Endothelial cell of umbilical vein (primary cell): ENCODE measurements at regions of chr4 and their contacts with region 1.

Region 1: DNA sequence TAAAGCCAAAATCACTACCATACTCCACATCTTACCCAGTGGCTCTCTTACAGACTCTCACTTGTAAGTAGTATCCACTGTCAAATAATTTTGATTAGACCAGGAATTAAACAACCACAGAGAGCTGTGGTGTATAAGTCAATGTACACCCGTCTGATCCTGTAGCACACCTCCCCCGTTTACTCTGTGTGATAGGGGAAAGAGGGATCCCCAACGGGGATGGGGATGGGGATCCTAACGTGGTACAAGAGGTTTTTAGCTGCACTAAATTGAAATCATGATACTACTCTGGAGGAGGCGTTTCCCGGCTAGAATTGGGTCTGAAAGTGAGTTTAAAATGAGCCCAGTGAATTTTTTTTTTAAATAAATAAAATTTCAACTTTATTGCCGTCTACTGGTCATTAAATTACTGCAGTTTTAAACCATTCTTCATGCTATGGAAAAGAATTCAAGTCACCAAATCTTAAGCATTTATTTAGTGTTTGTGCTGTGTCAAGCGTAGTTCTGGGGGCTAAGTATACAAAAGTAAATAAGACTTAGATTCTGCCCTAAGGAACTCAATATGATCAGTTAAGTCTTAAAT is 76.6 kb downstream of the INTS12 start:
- DNase-seq: no peak
- H3K4me3 ChIP-seq: no peak overlapping the region
- H3K27ac ChIP-seq: no peak overlapping the region
- H3K4me1 ChIP-seq: no peaks in the 10 kb centered on the region
- H3K27me3 ChIP-seq: no peaks in the 10 kb centered on the region
- CTCF ChIP-seq: no peak
- POLR2A ChIP-seq: no peak

Region 2: GRCh38 chr4:105140684-105141490 is 491.0 kb before region 1 on chr4:
- CTCF ChIA-PET with region 1: no interaction called
- POLR2A ChIA-PET with region 1: no interaction called
- dilution Hi-C with region 1: no loop called
- intact Hi-C with region 1: loop called (anchors 2 kb)
- DNase-seq: peak; percentile 50
- H3K4me3 ChIP-seq: no peak overlapping the region
- H3K27ac ChIP-seq: no peak overlapping the region
- H3K4me1 ChIP-seq: peaks cover 4% of the 10 kb centered on the region
- H3K27me3 ChIP-seq: no peaks in the 10 kb centered on the region
- CTCF ChIP-seq: peak; percentile 51 to 56
- POLR2A ChIP-seq: no peak

Region 3: GRCh38 chr4:105504744-105505143 is 127.2 kb before region 1 on chr4:
- CTCF ChIA-PET with region 1: no interaction called
- POLR2A ChIA-PET with region 1: no interaction called
- dilution Hi-C with region 1: no loop called
- intact Hi-C with region 1: no loop called
- DNase-seq: no peak
- H3K4me3 ChIP-seq: no peak overlapping the region
- H3K27ac ChIP-seq: no peak overlapping the region
- H3K4me1 ChIP-seq: no peaks in the 10 kb centered on the region
- H3K27me3 ChIP-seq: no peaks in the 10 kb centered on the region
- CTCF ChIP-seq: no peak
- POLR2A ChIP-seq: no peak